Psoas muscle (tissue), 8 donors: ENCODE measurements at regions of chr18 and their contacts with region 1.

Region 1: GRCh38 chr18:26548429-26549262 is at the start of gene KCTD1:
- DNase-seq: peak; percentile 85 to 91
- ATAC-seq: peak; percentile 78 to 88 (median 84)
- H3K4me3 ChIP-seq: peak within 1 kb of the TSS; percentile 82
- H3K27ac ChIP-seq: peak within 1 kb of the TSS; percentile 65
- H3K4me1 ChIP-seq: peaks cover 17% of the 10 kb centered on the region
- H3K27me3 ChIP-seq: peaks cover 0 to 37% (median 0%) of the 10 kb centered on the region in 3 donors
- CTCF ChIP-seq: no peak
- total RNA-seq, gene KCTD1: 3.5 to 8.6 (median 5.2) TPM

Region 2: GRCh38 chr18:25533218-25533617 is 1015.4 kb before region 1 on chr18:
- intact Hi-C with region 1: no loop called
- DNase-seq: no peak
- ATAC-seq: no peak
- H3K4me3 ChIP-seq: no peak overlapping the region
- H3K27ac ChIP-seq: no peak overlapping the region
- H3K4me1 ChIP-seq: no peaks in the 10 kb centered on the region
- H3K27me3 ChIP-seq: no peaks in the 10 kb centered on the region
- CTCF ChIP-seq: no peak

Region 3: GRCh38 chr18:26215247-26215970 is 333.2 kb before region 1 on chr18:
- intact Hi-C with region 1: no loop called
- DNase-seq: no peak
- ATAC-seq: no peak
- H3K4me3 ChIP-seq: no peak overlapping the region
- H3K27ac ChIP-seq: no peak overlapping the region
- H3K4me1 ChIP-seq: no peaks in the 10 kb centered on the region
- H3K27me3 ChIP-seq: no peaks in the 10 kb centered on the region
- CTCF ChIP-seq: no peak

Region 4: DNA sequence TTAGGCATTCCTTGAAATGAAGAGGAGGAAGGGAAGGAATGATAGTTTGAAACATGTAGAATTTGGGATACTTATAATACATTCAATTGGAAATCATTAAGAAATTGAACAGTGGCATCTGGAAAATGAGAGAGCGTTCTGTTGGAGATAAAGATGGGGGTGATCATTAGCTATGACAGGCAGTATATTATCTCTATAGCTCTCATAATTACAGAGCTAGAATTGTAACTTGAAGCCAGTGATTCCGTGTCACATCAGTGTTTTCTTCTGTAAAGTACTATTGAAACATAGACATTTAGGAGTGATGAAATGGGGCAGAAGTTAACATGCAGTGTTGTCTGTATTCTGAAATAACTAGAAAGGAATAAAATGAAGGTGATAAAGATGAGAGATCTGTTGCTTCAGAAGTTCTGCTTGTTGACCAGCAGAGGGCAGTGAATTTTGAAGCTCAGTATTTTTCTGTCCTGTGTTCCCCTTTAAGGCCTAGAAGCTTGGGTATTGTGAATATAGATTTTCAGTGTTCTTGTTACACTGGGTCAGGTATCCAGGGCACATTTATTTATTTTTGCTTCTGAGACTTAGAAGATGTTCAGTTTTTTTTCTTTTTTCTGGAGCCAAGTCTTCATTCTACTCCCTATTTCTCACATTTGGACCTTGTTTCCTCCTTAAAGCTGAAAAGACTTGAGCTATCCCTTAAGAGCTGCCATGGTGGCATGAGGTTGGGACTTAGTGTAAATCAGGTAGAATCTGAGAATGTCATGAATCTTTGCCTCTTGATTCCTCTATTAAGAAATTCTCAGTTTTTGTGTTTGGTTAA is 165.0 kb before region 1 on chr18:
- intact Hi-C with region 1: loop called in 1 of 2 experiments (anchors 5 kb)
- DNase-seq: no peak
- ATAC-seq: peak in 2 of 4 donors; percentile 64 to 75
- H3K4me3 ChIP-seq: no peak overlapping the region
- H3K27ac ChIP-seq: no peak overlapping the region
- H3K4me1 ChIP-seq: no peaks in the 10 kb centered on the region
- H3K27me3 ChIP-seq: no peaks in the 10 kb centered on the region
- CTCF ChIP-seq: peak; percentile 83

Region 5: GRCh38 chr18:26503382-26503781 is 45.3 kb before region 1 on chr18:
- intact Hi-C with region 1: loop called in 1 of 2 experiments (anchors 5 kb)
- DNase-seq: no peak
- ATAC-seq: no peak
- H3K4me3 ChIP-seq: no peak overlapping the region
- H3K27ac ChIP-seq: no peak overlapping the region
- H3K4me1 ChIP-seq: peaks cover 7% of the 10 kb centered on the region
- H3K27me3 ChIP-seq: no peaks in the 10 kb centered on the region
- CTCF ChIP-seq: no peak

Region 6: GRCh38 chr18:26648509-26649192 is 100.0 kb after region 1 on chr18:
- intact Hi-C with region 1: loop called in 1 of 2 experiments (anchors 5 kb)
- DNase-seq: no peak
- ATAC-seq: no peak
- H3K4me3 ChIP-seq: no peak overlapping the region
- H3K27ac ChIP-seq: no peak overlapping the region
- H3K4me1 ChIP-seq: no peaks in the 10 kb centered on the region
- H3K27me3 ChIP-seq: peaks cover 0 to 33% (median 0%) of the 10 kb centered on the region in 3 donors
- CTCF ChIP-seq: no peak

Region 7: GRCh38 chr18:26662996-26663395 is 114.3 kb after region 1 on chr18:
- intact Hi-C with region 1: loop called in 1 of 2 experiments (anchors 5 kb)
- DNase-seq: no peak
- ATAC-seq: no peak
- H3K4me3 ChIP-seq: no peak overlapping the region
- H3K27ac ChIP-seq: no peak overlapping the region
- H3K4me1 ChIP-seq: peaks cover 3% of the 10 kb centered on the region
- H3K27me3 ChIP-seq: peaks cover 0 to 51% (median 12%) of the 10 kb centered on the region in 3 donors
- CTCF ChIP-seq: no peak